PC-9 (cell line): ENCODE measurements at regions of chr3 and their contacts with region 1.

Region 1: GRCh38 chr3:13513051-13513908 is 33.2 kb downstream of the HDAC11 start:
- DNase-seq: peak; percentile 79
- H3K4me3 ChIP-seq: no peak overlapping the region
- H3K27ac ChIP-seq: peak overlapping the region; percentile 82
- H3K4me1 ChIP-seq: peaks cover 51% of the 10 kb centered on the region
- H3K27me3 ChIP-seq: no peaks in the 10 kb centered on the region
- CTCF ChIP-seq: no peak

Region 2: GRCh38 chr3:12638105-12638504 is 875.2 kb before region 1 on chr3:
- CTCF ChIA-PET with region 1: no interaction called
- POLR2A ChIA-PET with region 1: no interaction called
- intact Hi-C with region 1: no loop called
- DNase-seq: no peak
- H3K4me3 ChIP-seq: no peak overlapping the region
- H3K27ac ChIP-seq: no peak overlapping the region
- H3K4me1 ChIP-seq: no peaks in the 10 kb centered on the region
- H3K27me3 ChIP-seq: no peaks in the 10 kb centered on the region
- CTCF ChIP-seq: no peak

Region 3: DNA sequence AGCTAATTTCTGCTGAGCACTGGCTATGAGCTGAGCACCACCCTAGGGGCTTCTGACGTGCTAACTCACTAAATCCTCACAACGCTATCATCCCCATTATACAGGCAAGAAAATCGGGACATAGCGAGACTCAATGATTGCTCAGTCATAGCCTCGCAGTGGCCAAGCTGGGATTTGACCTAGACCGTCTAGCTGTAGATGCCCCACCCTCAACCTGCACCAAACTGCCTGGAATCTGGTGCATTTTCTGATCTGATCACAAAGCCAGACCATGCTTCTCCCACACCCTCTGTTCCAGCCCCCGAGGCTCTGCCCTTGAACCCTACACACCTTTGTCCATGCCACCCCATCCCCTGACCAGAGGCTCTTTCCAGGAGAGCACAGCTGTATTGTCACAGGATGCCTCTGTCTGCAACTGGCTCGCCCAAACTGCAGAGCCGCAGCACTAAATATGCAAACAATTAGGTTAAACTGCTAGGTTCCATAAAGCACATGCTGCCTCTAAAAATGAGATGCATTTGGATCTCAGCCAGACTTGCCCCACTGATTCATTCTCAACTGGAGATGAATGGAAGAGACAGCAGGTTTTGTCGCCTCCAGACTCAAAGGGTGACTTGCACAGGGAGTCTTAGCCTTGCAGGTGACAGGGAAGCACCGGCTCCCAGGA is 188.3 kb before region 1 on chr3:
- CTCF ChIA-PET with region 1: no interaction called
- POLR2A ChIA-PET with region 1: no interaction called
- intact Hi-C with region 1: no loop called
- DNase-seq: no peak
- H3K4me3 ChIP-seq: no peak overlapping the region
- H3K27ac ChIP-seq: no peak overlapping the region
- H3K4me1 ChIP-seq: no peaks in the 10 kb centered on the region
- H3K27me3 ChIP-seq: no peaks in the 10 kb centered on the region
- CTCF ChIP-seq: no peak

Region 4: DNA sequence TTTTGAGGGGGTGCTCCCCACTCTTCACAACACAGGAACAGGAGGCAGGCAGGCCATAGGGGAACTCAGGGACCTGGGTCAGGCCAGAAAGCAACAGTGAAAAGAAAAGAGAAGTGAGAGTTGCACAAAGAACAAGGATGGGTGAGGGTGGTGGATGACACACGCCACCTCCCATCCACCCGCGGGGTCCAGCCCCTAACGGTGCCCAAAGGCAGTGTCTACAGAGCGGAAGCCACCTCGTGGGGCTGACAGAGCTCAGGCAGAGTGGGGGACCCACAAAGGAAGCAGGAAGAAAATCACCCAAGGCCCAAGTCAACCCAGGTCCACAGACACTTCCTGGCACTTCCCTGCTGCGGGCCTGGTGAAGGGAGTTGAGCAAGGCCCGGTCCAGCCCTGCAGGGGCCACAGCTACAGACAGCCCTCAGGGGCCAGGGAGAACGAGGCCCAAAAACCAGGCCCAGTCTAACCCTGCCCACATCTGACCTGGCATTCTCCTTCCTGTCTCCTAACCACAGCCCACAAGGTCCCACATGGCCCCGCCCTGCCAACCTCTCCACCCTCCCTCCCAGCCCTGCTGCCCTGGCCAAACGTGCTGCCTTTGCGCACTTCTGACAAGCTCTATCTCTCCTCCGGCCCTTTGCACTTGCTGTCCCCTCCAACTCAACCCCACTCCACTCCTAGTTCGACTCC is 99.1 kb before region 1 on chr3:
- CTCF ChIA-PET with region 1: no interaction called
- POLR2A ChIA-PET with region 1: no interaction called
- intact Hi-C with region 1: no loop called
- DNase-seq: peak; percentile 44 to 49
- H3K4me3 ChIP-seq: 0 out of 2 replicates have a peak overlapping the region, but pooled peaks have one; percentile 4
- H3K27ac ChIP-seq: peak overlapping the region; percentile 67
- H3K4me1 ChIP-seq: peaks cover 66% of the 10 kb centered on the region
- H3K27me3 ChIP-seq: no peaks in the 10 kb centered on the region
- CTCF ChIP-seq: no peak

Region 5: GRCh38 chr3:13532126-13532525 is 18.8 kb after region 1 on chr3:
- CTCF ChIA-PET with region 1: interaction called, 7 read pairs
- POLR2A ChIA-PET with region 1: interaction called, 3 read pairs
- intact Hi-C with region 1: loop called (anchors 2 kb)
- DNase-seq: no peak
- H3K4me3 ChIP-seq: no peak overlapping the region
- H3K27ac ChIP-seq: no peak overlapping the region
- H3K4me1 ChIP-seq: peaks cover 56% of the 10 kb centered on the region
- H3K27me3 ChIP-seq: no peaks in the 10 kb centered on the region
- CTCF ChIP-seq: no peak